ENCODE measurements at regions of chr4 and their contacts with region 1.

Region 1: GRCh38 chr4:78951862-78952472 is 12.7 kb upstream of the PAQR3 start:
- DNase-seq: peak in 5 of 14 experiments; percentile 9 to 69 (median 53)
- ATAC-seq: peak; percentile 65
- H3K4me3 ChIP-seq: no peak overlapping the region
- H3K4me3 Mint-ChIP-seq: no peak overlapping the region
- H3K27ac ChIP-seq: no peak overlapping the region
- H3K27ac Mint-ChIP-seq: no peak overlapping the region
- H3K4me1 ChIP-seq: no peaks in the 10 kb centered on the region
- H3K4me1 Mint-ChIP-seq: no peaks in the 10 kb centered on the region
- H3K27me3 ChIP-seq: peaks cover 2 to 3% of the 10 kb centered on the region in 2 experiments
- H3K27me3 Mint-ChIP-seq: peaks cover 17% of the 10 kb centered on the region
- CTCF ChIP-seq: peak; percentile 75

Region 2: GRCh38 chr4:78845472-78845871 is 106.5 kb before region 1 on chr4:
- CTCF ChIA-PET with region 1: no interaction called
- POLR2A ChIA-PET with region 1: no interaction called
- intact Hi-C with region 1: no loop called
- DNase-seq: peak in 1 of 14 experiments; percentile 1
- ATAC-seq: no peak
- H3K4me3 ChIP-seq: no peak overlapping the region
- H3K4me3 Mint-ChIP-seq: no peak overlapping the region
- H3K27ac ChIP-seq: no peak overlapping the region
- H3K27ac Mint-ChIP-seq: no peak overlapping the region
- H3K4me1 ChIP-seq: no peaks in the 10 kb centered on the region
- H3K4me1 Mint-ChIP-seq: no peaks in the 10 kb centered on the region
- H3K27me3 ChIP-seq: no peaks in the 10 kb centered on the region
- H3K27me3 Mint-ChIP-seq: no peaks in the 10 kb centered on the region
- CTCF ChIP-seq: no peak

Region 3: DNA sequence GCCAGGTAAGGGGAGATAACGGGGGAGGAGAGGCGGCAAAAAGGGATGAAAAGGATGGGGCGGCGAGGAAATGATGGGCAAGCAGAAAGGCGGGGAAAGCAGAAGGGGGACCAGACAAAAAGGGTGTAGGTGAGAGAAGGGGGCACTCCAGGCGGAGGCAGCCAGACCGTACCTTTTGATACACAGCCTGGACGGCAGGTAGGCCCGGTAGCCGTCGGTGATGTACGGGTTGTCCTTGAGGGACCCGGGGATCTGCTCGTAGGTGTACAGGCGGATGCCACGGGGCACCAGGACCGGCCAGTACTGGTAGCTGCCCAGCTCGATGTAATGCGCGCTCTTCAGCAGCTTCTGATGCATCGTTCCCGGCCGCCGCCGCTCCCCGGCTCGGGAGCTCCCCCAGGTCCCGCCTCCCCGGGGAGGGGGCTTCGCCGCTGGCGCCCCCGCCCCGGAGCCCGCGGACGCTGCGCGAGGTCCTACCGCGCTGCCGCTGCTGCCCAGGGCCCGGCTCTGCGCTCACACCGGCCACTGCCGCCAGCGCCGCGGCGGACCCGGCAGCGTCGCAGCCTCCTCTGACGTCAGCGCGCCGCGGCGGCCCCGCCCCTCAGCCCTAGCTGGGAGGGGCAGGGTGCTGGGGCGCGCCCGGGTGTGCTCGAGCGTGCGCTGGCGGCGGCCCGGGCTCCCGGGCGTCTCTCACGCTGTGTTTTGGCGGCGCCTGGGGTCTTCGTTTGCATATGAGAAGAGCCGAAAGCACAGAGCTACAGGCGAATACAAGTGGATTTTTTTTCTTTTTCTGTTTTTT is 12.9 kb before region 1 on chr4 and contains the start of gene PAQR3:
- CTCF ChIA-PET with region 1: interaction called, 13 read pairs
- POLR2A ChIA-PET with region 1: interaction called, 6 read pairs
- intact Hi-C with region 1: no loop called
- DNase-seq: peak; percentile 73 to 94 (median 82)
- ATAC-seq: peak; percentile 96
- H3K4me3 ChIP-seq: peak within 1 kb of the TSS; percentile 87
- H3K4me3 Mint-ChIP-seq: peak within 1 kb of the TSS; percentile 93
- H3K27ac ChIP-seq: no peak within 1 kb of the TSS
- H3K27ac Mint-ChIP-seq: peak within 1 kb of the TSS; percentile 82
- H3K4me1 ChIP-seq: peaks cover 24% of the 10 kb centered on the region
- H3K4me1 Mint-ChIP-seq: peaks cover 44% of the 10 kb centered on the region
- H3K27me3 ChIP-seq: no peaks in the 10 kb centered on the region
- H3K27me3 Mint-ChIP-seq: peaks cover 13% of the 10 kb centered on the region
- CTCF ChIP-seq: no peak
- total RNA-seq, gene PAQR3: 29.5 to 30.7 TPM

Region 4: DNA sequence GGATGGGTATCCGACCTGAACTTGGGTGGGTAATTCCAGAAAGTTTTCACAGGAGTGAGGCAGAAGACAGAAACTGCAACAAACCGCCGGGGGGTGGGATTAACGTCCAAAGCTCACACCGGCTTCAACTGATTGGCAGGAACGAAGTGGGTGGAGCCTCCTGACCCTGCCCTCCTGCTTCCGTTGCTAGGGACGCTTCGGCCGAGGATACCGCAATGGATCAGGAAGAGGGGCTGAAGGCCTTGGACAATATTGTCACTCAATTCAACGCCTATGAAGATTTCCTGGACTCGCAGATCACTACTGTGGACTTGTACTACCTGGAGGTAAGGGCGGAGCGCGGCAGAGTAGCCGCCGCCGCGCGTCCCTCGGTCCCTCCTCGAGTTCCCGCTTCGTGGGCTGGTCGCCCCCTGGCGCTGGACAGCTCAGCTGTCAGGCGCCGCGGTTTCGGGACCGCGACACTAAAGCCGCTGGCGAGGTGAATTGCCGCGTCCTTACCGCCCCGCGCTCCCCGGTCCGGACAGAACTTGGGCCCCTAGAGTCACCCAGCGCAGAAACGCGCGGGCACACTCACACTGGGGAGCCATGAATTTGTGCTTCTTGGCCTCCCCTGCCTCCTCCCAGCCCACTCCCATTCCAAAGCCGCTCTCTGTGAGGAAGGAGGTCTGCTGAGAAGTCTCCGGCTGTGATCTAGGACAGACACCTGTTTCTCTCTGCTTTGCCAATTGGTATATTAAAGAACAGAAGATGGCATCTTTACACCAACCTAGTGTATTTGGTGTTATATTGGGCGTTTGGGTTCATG is 1383.8 kb after region 1 on chr4 and contains the start of gene CFAP299:
- CTCF ChIA-PET with region 1: no interaction called
- POLR2A ChIA-PET with region 1: no interaction called
- intact Hi-C with region 1: loop called in 1 of 2 experiments (anchors 10 kb)
- DNase-seq: peak in 11 of 14 experiments; percentile 5 to 73 (median 39)
- ATAC-seq: peak; percentile 66
- H3K4me3 ChIP-seq: peak within 1 kb of the TSS; percentile 54
- H3K4me3 Mint-ChIP-seq: peak within 1 kb of the TSS; percentile 92
- H3K27ac ChIP-seq: no peak within 1 kb of the TSS
- H3K27ac Mint-ChIP-seq: no peak within 1 kb of the TSS
- H3K4me1 ChIP-seq: peaks cover 13% of the 10 kb centered on the region
- H3K4me1 Mint-ChIP-seq: peaks cover 14% of the 10 kb centered on the region
- H3K27me3 ChIP-seq: peaks cover 24 to 36% of the 10 kb centered on the region in 2 experiments
- H3K27me3 Mint-ChIP-seq: peaks cover 30% of the 10 kb centered on the region
- CTCF ChIP-seq: no peak
- total RNA-seq, gene CFAP299: not detected

Measured in CD4-positive, alpha-beta T cell (primary cell).